ENCODE measurements at regions of chr13 and their contacts with region 1.

Region 1: DNA sequence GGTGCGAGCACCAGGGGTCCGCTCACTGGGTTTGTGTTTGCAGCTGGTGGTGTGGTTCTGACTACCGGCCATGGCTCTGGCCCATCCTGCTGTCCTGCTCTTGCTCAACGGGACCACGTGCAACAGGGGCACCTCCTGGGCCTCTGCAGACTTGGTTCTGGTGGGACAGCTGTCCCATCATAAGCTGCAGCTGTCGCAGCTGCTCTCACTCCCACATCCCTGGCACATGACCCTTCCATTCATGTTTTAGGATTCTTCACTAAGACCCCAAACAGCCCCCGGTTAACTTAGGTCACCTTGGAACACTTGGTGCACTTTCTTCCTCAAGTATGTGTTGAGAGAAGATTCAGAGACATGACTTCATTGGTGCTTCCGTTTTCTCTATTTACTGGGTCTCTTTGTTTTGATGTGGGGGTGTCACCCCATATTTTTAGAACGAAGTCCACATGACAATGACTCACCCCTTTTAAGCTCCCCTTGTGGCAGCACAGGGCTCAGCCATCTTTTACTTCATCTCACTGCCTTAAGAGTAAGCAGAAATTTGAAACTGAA is 68.4 kb upstream of the ARHGEF7 start:
- DNase-seq: no peak
- H3K4me3 ChIP-seq: no peak overlapping the region
- H3K27ac ChIP-seq: peak overlapping the region; percentile 4
- H3K4me1 ChIP-seq: peaks cover 17% of the 10 kb centered on the region
- H3K27me3 ChIP-seq: peaks cover 8% of the 10 kb centered on the region
- CTCF ChIP-seq: peak; percentile 30

Region 2: GRCh38 chr13:110593430-110594130 is 453.1 kb before region 1 on chr13:
- intact Hi-C with region 1: loop called (anchors 10 kb)
- DNase-seq: no peak
- H3K4me3 ChIP-seq: no peak overlapping the region
- H3K27ac ChIP-seq: no peak overlapping the region
- H3K4me1 ChIP-seq: no peaks in the 10 kb centered on the region
- H3K27me3 ChIP-seq: no peaks in the 10 kb centered on the region
- CTCF ChIP-seq: peak; percentile 79

Region 3: DNA sequence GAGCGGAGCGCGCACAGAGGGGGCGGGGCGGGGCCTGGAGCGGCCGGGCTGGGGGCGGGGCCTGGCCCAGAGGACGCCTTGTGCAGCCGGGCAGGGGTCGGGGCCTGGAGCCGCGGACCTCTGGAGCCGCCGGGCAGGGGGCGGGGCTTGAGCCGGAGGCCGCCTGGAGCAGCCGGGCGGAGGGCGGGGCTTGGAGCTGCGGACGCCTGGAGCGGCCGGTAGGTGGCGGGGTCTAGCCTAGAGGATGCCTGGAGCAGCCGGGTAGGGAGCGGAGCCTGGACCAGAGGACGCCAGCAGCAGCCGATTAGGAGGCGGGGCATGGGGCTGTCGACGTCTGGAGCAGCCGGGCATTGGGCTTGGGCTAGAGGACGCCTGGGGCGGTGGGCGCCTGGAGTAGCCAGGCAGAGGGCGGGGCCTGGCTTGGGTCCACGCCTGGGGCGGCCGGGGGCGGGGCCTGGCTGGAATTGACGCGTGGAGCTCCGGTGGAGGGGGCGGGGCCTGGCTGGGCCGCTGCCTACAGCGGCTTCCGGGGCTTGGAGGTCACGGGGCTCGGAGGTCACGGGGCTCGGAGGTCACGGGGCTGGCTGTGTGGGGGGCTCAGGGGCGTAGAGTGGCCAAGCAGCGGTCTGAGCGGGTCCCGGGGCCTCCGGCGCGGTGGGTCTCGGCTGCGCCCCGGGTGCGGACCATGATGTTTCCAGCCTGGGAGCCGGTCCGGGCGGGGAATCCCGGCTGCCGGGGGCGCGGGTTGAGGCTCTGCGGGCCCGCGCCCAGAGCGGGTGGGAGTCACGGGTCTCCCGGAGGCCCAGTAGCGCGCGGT is 131.4 kb before region 1 on chr13 and contains the start of gene ANKRD10:
- intact Hi-C with region 1: loop called (anchors 5 kb)
- DNase-seq: peak; percentile 99
- H3K4me3 ChIP-seq: peak within 1 kb of the TSS; percentile 95
- H3K27ac ChIP-seq: peak within 1 kb of the TSS; percentile 100
- H3K4me1 ChIP-seq: peaks cover 68% of the 10 kb centered on the region
- H3K27me3 ChIP-seq: no peaks in the 10 kb centered on the region
- CTCF ChIP-seq: peak; percentile 94
- total RNA-seq, gene ANKRD10: 45.9 TPM

Region 4: DNA sequence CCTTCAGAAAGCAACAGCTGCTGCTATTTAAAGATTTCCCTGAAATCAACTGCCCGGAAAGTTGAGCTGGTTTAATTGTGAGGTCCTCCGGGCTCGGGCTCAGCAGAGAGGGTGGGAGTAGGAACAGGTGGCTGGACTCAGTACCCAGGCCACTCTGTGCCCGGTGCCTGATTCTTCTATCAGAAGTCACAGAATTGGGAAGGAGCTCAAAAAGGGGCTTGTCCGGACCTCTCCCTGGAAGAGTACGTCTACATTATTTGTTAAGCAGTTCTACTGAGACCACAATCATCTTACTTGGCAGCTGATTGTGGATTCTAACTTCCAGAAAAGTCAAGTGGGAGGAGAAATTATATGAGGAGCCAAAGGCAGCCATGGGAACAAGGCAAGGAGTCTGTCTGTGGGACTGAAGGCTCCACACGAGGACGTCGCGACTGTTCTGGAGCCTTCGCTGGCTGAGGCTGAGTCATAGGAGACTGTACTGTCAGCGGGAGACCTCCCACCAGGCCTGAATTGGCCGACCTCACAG is 40.1 kb before region 1 on chr13:
- intact Hi-C with region 1: no loop called
- DNase-seq: peak; percentile 83
- H3K4me3 ChIP-seq: peak overlapping the region; percentile 29
- H3K27ac ChIP-seq: peak overlapping the region; percentile 91
- H3K4me1 ChIP-seq: peaks cover 29% of the 10 kb centered on the region
- H3K27me3 ChIP-seq: no peaks in the 10 kb centered on the region
- CTCF ChIP-seq: no peak

Region 5: GRCh38 chr13:111095031-111095840 is 48.6 kb after region 1 on chr13:
- intact Hi-C with region 1: no loop called
- DNase-seq: no peak
- H3K4me3 ChIP-seq: no peak overlapping the region
- H3K27ac ChIP-seq: no peak overlapping the region
- H3K4me1 ChIP-seq: no peaks in the 10 kb centered on the region
- H3K27me3 ChIP-seq: peaks cover 54% of the 10 kb centered on the region
- CTCF ChIP-seq: no peak

Region 6: DNA sequence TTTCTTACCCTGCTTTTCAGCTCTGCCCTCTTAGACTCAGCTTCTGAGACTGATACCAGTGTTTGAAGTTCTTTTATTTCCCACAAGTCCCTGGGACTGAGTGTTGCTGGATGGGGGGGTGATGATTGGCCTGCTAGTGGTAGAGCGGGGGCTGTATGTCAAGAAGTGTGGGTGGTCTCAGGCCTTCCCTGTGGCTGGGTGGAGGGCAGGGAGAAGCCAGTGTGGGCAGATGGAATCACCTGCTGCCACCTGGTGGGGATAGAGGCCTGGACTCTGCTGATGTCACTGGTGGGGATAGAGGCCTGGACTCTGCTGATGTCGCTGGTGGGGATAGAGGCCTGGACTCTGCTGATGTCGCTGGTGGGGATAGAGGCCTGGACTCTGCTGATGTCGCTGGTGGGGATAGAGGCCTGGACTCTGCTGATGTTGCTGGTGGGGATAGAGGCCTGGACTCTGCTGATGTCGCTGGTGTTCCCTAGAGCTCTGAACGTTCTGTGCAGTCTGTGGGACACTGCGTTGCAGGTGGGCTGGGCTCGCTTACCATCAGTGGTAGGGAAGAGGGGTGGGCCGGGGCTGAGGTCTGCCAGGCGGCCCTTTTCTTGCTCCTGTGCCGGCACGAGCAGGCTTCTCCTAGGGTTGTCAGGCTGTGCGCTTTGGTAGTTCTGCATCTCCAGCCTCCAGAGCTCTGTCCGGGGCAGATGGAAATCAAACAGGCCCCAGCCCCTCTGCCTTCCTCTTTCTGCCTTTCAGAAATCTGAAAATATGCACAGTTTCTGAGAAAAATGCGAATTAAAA is 169.7 kb after region 1 on chr13:
- intact Hi-C with region 1: no loop called
- DNase-seq: no peak
- H3K4me3 ChIP-seq: no peak overlapping the region
- H3K27ac ChIP-seq: peak overlapping the region; percentile 44
- H3K4me1 ChIP-seq: peaks cover 95% of the 10 kb centered on the region
- H3K27me3 ChIP-seq: no peaks in the 10 kb centered on the region
- CTCF ChIP-seq: peak; percentile 64

Measured in left ventricle myocardium inferior (tissue), 1 donor.